ENCODE measurements at regions of chr15 and their contacts with region 1.

Region 1: DNA sequence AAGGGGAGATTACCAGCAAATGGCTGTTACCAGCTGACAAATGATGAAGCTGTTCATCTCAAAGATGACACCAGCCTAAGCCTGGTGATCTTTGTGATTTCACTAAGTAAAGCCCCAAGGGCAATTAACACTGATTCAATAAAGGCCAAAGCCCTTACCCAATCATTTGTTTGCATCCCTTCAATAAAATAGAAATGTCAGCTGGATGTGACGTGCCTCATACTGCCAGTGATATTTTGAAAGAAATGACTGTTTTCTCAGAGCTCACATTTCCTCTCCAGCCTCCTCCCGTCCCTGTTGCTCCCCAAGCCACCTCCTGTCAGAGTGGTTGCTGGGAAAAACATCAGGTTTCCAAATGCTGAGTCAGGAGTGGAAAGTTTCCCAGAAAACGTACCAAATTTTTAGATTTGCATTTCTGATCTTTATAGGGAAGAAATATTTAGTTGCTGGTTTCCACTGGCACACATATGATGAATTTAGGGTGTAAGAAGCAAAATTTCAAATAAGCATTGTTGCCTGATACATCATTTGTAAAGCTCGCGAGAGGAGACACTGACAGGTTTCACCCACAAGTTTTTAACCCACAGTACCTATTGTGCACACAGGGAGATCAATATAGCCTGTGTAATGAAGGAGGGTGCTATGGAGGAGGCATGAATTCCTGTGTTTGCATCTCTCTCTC is 21.0 kb downstream of the C2CD4A start:
- DNase-seq: peak in 1 of 10 donors; percentile 75

Region 2: GRCh38 chr15:62142731-62143130 is 54.9 kb after region 1 on chr15:
- intact Hi-C with region 1: loop called (anchors 2 kb)
- DNase-seq: no peak

Measured in posterior cingulate gyrus (tissue), 11 donors.